Sigmoid colon (tissue), 7 donors: ENCODE measurements at regions of chr4 and their contacts with region 1.

Region 1: DNA sequence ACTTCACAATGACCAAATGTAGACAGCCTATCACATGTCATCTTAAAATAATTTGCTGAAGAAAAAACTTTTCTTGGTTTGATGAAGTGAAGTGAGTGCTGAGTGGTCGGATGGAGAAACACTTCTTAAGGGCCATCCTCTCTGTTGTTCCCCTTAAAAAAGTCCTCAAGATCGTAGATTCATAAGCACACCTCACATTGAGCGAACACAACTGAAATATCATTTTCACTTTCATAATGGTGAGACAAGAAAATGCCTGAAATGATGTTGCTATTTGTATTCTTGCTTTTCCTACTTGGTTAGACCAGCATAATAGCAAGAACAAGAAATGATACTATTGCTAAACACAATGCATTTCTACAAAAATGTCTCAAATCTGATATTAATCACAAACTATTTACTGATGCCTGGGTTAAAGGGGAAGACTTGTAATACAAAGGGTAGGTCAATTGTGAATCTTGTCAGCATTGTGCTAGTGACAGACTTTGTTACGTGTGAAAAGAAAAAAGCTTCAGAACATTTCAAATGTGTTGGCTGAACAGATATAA is 305.6 kb upstream of the NR3C2 start:
- DNase-seq: no peak
- H3K4me3 ChIP-seq: no peak overlapping the region
- H3K27ac ChIP-seq: no peak overlapping the region
- H3K4me1 ChIP-seq: no peaks in the 10 kb centered on the region
- H3K27me3 ChIP-seq: peaks cover 0 to 3% (median 0%) of the 10 kb centered on the region in 3 donors
- CTCF ChIP-seq: no peak
- EP300 ChIP-seq: no peak
- POLR2A ChIP-seq: no peak

Region 2: GRCh38 chr4:148651991-148652390 is 95.8 kb before region 1 on chr4:
- intact Hi-C with region 1: no loop called
- DNase-seq: no peak
- H3K4me3 ChIP-seq: no peak overlapping the region
- H3K27ac ChIP-seq: no peak overlapping the region
- H3K4me1 ChIP-seq: no peaks in the 10 kb centered on the region
- H3K27me3 ChIP-seq: no peaks in the 10 kb centered on the region
- CTCF ChIP-seq: no peak
- EP300 ChIP-seq: no peak
- POLR2A ChIP-seq: no peak

Region 3: DNA sequence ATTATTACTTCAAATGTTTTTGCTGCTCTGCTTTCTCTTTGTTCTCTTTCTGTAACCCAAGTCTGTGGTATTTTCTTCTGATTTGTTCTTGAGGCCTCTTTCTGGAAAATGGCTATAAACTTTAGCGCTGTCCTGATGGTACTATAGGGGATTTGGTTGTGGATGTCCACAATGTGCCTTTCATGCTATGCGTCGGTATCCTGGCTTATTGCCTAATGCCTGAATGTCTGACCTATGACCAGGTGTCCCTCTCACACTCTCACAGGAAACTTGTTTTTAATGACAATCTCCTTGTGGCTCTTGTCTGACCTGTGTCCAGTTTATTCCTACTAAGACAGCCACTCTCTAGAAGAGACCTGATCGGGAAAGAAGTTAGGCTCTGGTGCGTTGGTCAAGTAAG is 83.2 kb before region 1 on chr4:
- intact Hi-C with region 1: no loop called
- DNase-seq: no peak
- H3K4me3 ChIP-seq: no peak overlapping the region
- H3K27ac ChIP-seq: no peak overlapping the region
- H3K4me1 ChIP-seq: no peaks in the 10 kb centered on the region
- H3K27me3 ChIP-seq: no peaks in the 10 kb centered on the region
- CTCF ChIP-seq: no peak
- EP300 ChIP-seq: no peak
- POLR2A ChIP-seq: no peak

Region 4: GRCh38 chr4:148676344-148676743 is 71.5 kb before region 1 on chr4:
- intact Hi-C with region 1: loop called (anchors 2 kb)
- DNase-seq: no peak
- H3K4me3 ChIP-seq: no peak overlapping the region
- H3K27ac ChIP-seq: no peak overlapping the region
- H3K4me1 ChIP-seq: no peaks in the 10 kb centered on the region
- H3K27me3 ChIP-seq: no peaks in the 10 kb centered on the region
- CTCF ChIP-seq: no peak
- EP300 ChIP-seq: no peak
- POLR2A ChIP-seq: no peak

Region 5: GRCh38 chr4:148795156-148795864 is 47.5 kb after region 1 on chr4:
- intact Hi-C with region 1: no loop called
- DNase-seq: no peak
- H3K4me3 ChIP-seq: no peak overlapping the region
- H3K27ac ChIP-seq: no peak overlapping the region
- H3K4me1 ChIP-seq: no peaks in the 10 kb centered on the region
- H3K27me3 ChIP-seq: no peaks in the 10 kb centered on the region
- CTCF ChIP-seq: no peak
- EP300 ChIP-seq: no peak
- POLR2A ChIP-seq: no peak